ENCODE measurements at regions of chr17 and their contacts with region 1.

Region 1: DNA sequence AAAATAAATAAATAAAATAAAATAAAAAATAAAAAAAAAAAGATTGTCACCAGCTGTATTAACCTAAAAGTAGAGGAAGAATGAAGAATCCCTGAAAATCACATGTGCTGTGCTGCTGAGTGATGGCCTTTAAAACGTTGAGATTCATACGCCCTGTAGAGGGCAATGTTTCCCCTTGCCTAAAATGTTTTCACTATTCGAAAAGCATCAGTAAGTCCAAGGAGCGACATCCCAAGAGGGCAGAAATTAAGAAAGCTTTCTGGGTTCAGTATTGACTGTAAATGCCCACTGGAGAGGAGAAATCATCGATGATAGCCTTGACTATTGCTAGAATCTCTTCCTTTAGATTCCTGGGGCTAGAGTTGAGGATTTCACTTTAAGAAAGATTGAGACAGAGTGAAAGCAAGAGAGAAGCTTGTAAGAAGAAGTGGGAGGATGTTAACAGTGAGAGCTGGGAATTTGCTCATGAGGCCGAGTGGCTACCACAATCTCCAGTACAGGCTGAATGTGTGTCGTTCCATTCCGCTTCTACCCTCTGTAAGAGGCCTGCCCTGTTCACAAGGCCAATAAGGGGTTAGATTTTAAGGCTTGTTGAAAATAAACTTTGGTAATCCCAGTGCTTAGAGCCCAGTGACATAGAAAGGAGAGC is 170.8 kb upstream of the FAM20A start:
- DNase-seq: no peak
- ATAC-seq: peak in 3 of 4 donors; percentile 53 to 79 (median 74)
- H3K4me3 ChIP-seq: peak overlapping the region; percentile 32
- H3K27ac ChIP-seq: peak overlapping the region; percentile 16
- H3K4me1 ChIP-seq: no peaks in the 10 kb centered on the region
- H3K27me3 ChIP-seq: no peaks in the 10 kb centered on the region
- CTCF ChIP-seq: peak; percentile 37

Region 2: DNA sequence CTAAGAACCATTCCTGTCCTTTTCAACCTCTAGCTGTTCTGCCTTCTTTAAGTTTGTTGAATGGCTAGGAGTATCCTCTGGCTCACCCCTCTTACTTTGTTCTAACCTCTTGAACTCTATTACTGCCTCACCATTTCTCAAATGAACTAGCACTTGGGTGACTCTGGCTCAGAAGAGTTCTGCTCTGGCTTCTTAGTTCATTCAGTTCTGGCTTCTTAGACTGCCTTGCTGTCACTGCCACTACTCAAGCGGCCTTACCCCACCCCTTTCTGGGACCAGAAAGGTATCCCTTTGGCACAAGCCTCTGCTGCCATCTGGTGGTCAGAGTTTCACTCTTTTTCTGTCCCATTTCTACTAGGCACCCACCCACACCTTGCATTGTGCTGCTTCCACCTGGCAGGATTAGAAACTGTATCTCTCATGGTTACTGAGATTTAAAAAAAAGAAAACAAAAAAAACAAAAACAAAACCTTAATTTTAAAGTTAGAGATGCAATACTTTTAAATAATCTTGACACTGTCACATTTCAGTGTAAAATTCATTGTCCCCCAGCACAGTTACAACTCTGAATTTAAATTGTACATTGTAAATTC is 463.4 kb after region 1 on chr17:
- intact Hi-C with region 1: loop called (anchors 5 to 10 kb)
- DNase-seq: peak; percentile 67 to 80
- ATAC-seq: peak; percentile 39 to 74 (median 66)
- H3K4me3 ChIP-seq: no peak overlapping the region
- H3K27ac ChIP-seq: no peak overlapping the region
- H3K4me1 ChIP-seq: no peaks in the 10 kb centered on the region
- H3K27me3 ChIP-seq: no peaks in the 10 kb centered on the region
- CTCF ChIP-seq: peak; percentile 58

Region 3: DNA sequence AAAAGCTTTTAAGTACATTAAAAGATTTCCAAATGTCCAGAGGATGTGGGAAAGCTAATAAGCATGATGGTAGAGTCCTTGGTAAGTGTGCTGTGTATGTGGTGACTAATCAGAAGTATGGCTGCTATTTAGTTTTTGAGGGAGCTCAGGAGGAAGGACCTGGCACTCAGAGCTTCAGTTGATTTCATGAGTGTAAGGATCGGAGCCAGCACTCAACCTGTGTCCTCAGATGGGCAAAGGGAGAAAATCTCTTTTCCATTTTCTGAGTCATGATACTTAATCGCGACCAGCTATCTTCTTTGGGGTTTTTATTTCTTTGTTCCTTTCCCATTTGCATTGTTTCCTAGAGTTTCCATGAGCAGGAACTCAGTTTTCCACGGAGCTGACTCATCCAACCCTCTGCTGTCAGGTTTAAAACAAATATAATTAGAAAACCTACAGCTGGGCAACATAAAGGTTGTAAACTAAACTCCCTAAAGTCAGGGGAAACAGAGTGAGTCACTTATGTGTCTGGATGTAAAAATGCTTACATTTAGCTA is 767.9 kb after region 1 on chr17:
- intact Hi-C with region 1: no loop called
- DNase-seq: no peak
- ATAC-seq: no peak
- H3K4me3 ChIP-seq: no peak overlapping the region
- H3K27ac ChIP-seq: no peak overlapping the region
- H3K4me1 ChIP-seq: no peaks in the 10 kb centered on the region
- H3K27me3 ChIP-seq: no peaks in the 10 kb centered on the region
- CTCF ChIP-seq: no peak

Measured in psoas muscle (tissue), 8 donors.